Panc1 (cell line): ENCODE measurements at regions of chr14 and their contacts with region 1.

Region 1: GRCh38 chr14:44479375-44479774 is 27.7 kb downstream of the FSCB start:
- DNase-seq: no peak
- ATAC-seq: no peak
- H3K4me3 ChIP-seq: no peak overlapping the region
- H3K27ac ChIP-seq: no peak overlapping the region
- H3K4me1 ChIP-seq: no peaks in the 10 kb centered on the region
- H3K27me3 ChIP-seq: no peaks in the 10 kb centered on the region
- CTCF ChIP-seq: no peak

Region 2: DNA sequence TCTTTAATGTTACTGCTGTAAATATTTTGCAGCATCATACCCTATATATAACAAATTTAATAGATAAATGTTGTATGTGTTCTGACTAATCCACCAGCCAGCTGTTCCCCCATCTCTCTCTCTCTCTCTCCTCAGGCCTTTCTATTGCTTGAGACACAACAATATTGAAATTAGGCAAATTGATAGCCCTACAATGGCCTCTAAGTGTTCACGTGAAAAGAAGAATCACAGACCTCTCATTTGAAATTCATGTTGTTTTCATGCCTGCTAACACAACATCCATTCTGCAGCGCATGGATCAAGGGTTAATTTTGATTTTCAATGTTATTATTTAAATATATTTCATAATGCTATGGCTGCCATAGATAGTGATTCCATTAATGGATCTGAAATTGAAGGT is 29.5 kb after region 1 on chr14:
- CTCF ChIA-PET with region 1: no interaction called
- POLR2A ChIA-PET with region 1: interaction called, 16 read pairs
- in situ Hi-C with region 1: no loop called
- intact Hi-C with region 1: no loop called
- DNase-seq: no peak
- ATAC-seq: no peak
- H3K4me3 ChIP-seq: no peak overlapping the region
- H3K27ac ChIP-seq: no peak overlapping the region
- H3K4me1 ChIP-seq: no peaks in the 10 kb centered on the region
- H3K27me3 ChIP-seq: no peaks in the 10 kb centered on the region
- CTCF ChIP-seq: no peak

Region 3: DNA sequence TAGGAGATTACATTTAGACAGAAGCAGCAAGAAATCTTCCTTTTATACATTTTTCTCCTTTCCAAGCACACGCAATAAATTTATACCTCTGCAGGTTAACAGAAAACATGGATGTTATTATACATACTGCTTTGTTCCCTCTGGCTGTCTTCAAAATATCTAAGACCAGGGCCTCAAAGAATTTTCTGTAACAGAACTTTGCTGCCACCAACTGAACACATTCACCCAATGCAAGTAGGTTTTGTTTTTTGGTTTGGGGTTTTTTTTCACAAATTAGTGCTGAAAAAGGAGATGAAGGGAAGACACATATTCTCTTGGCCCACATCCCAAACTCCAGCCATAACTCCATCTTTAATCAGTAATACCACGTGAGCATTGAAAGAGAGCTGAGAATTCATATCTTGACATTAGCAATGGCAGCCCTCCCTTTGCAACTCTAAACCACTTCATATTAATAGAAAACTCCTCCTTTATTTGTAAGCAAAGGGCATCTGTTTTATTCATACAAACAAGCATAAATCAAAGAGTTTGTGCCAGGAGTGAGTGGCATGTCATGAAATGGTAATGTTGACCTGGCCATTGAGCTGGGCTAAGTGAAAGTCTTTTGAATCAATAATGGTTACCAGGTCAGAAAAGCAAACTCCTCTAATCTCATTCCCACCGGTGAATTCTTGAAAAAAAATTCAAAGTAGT is 178.5 kb after region 1 on chr14:
- CTCF ChIA-PET with region 1: no interaction called
- POLR2A ChIA-PET with region 1: no interaction called
- in situ Hi-C with region 1: no loop called
- intact Hi-C with region 1: no loop called
- DNase-seq: no peak
- ATAC-seq: no peak
- H3K4me3 ChIP-seq: no peak overlapping the region
- H3K27ac ChIP-seq: no peak overlapping the region
- H3K4me1 ChIP-seq: no peaks in the 10 kb centered on the region
- H3K27me3 ChIP-seq: no peaks in the 10 kb centered on the region
- CTCF ChIP-seq: peak; percentile 45; the same call in 1 of the 2 replicates